ENCODE measurements at regions of chr11 and their contacts with region 1.

Region 1: DNA sequence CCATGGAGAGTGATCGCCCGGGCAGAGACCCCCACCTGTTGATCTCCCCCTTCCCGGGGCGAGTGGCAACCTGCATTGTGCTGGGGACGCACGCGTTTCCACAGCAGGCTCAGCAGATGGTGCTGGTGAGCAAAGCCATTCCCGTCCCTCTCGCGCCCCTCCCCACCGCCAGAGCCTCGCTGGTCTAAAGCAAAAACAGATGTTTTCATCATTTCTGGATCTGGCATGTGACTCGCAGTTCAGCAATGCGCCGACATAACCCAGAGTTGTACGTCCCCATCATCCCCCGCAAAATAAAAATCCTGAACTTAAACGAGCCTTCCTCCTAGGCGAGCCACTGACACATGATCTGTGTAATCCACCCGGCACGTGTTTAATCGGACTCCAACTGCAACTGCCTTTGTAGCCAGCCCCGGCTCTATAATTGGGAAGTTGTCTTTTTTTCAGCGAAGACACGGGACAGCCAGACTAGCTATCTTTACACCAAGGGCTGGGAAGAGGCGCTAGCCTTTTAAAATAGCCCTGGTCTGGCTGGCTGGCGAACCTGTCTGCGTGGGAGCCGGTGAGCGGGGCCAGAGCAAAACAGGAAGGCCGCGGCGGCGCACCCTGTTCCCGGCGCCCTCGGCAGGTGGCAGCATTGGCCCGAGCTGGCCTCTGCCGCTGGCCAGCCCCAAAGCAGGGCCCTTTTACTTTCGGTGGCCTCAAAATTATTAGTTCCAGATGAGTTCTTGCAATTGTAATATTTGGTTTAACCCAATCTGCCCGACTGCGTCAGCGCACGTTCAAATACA is 203.0 kb upstream of the SORL1-AS1 start:
- DNase-seq: peak in 1 of 2 donors; percentile 97
- H3K4me3 ChIP-seq: peak overlapping the region; percentile 40 to 41
- H3K27ac ChIP-seq: peak overlapping the region; percentile 85
- H3K4me1 ChIP-seq: peaks cover 27% of the 10 kb centered on the region
- H3K27me3 ChIP-seq: no peaks in the 10 kb centered on the region
- CTCF ChIP-seq: peak; percentile 21 to 82 (median 77)
- POLR2A ChIP-seq: no peak

Region 2: GRCh38 chr11:122101625-122102291 is 446.0 kb after region 1 on chr11:
- intact Hi-C with region 1: loop called (anchors 1 kb)
- DNase-seq: no peak
- H3K4me3 ChIP-seq: peak overlapping the region; percentile 53 to 56
- H3K27ac ChIP-seq: peak overlapping the region; percentile 87
- H3K4me1 ChIP-seq: peaks cover 11% of the 10 kb centered on the region
- H3K27me3 ChIP-seq: no peaks in the 10 kb centered on the region
- CTCF ChIP-seq: peak in 2 of 3 experiments; percentile 53 to 54
- POLR2A ChIP-seq: peak in 1 of 2 donors; percentile 5

Region 3: GRCh38 chr11:122202951-122203456 is 547.3 kb after region 1 on chr11:
- intact Hi-C with region 1: loop called (anchors 5 kb)
- DNase-seq: no peak
- H3K4me3 ChIP-seq: peak overlapping the region; percentile 36 to 55
- H3K27ac ChIP-seq: peak overlapping the region; percentile 67
- H3K4me1 ChIP-seq: peaks cover 23% of the 10 kb centered on the region
- H3K27me3 ChIP-seq: no peaks in the 10 kb centered on the region
- CTCF ChIP-seq: peak; percentile 71 to 97 (median 97)
- POLR2A ChIP-seq: no peak

Region 4: GRCh38 chr11:122505304-122506006 is 849.7 kb after region 1 on chr11:
- intact Hi-C with region 1: loop called (anchors 5 kb)
- DNase-seq: peak in 1 of 2 donors; percentile 96
- H3K4me3 ChIP-seq: no peak overlapping the region
- H3K27ac ChIP-seq: peak overlapping the region; percentile 56
- H3K4me1 ChIP-seq: no peaks in the 10 kb centered on the region
- H3K27me3 ChIP-seq: no peaks in the 10 kb centered on the region
- CTCF ChIP-seq: peak; percentile 67 to 92 (median 91)
- POLR2A ChIP-seq: no peak